Heart left ventricle (tissue), 16 donors: ENCODE measurements at regions of chr10 and their contacts with region 1.

Region 1: DNA sequence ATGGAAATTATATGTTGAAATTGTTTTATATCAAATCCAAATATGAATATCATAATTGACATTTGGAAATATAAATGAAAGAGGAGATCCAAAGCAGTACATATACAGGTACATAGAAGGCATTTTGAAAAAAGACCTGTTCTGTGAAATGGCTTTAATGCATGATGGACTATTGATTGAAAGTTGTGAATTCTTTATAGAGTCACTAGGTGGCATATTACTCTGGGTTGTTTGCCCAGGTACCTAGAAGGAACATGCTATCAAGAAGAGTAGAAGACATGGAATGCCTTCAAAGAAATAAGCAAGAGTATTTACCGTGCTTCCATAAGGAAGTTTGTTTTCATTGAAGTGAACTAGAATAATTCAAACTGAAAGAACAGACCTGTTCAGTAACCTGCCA is 160.0 kb upstream of the ANK3 start:
- DNase-seq: no peak
- ATAC-seq: no peak
- H3K4me3 ChIP-seq: no peak overlapping the region
- H3K27ac ChIP-seq: no peak overlapping the region
- H3K4me1 ChIP-seq: peaks cover 0 to 5% (median 0%) of the 10 kb centered on the region in 12 donors
- H3K27me3 ChIP-seq: no peaks in the 10 kb centered on the region
- CTCF ChIP-seq: peak in 7 of 12 donors; percentile 9 to 40 (median 31)
- POLR2A ChIP-seq: no peak

Region 2: GRCh38 chr10:60444494-60445064 is 105.1 kb before region 1 on chr10:
- intact Hi-C with region 1: loop called in 2 of 10 experiments (anchors 5 to 10 kb)
- DNase-seq: no peak
- ATAC-seq: no peak
- H3K4me3 ChIP-seq: no peak overlapping the region
- H3K27ac ChIP-seq: no peak overlapping the region
- H3K4me1 ChIP-seq: peaks cover 0 to 15% (median 12%) of the 10 kb centered on the region in 12 donors
- H3K27me3 ChIP-seq: no peaks in the 10 kb centered on the region
- CTCF ChIP-seq: peak in 11 of 12 donors; percentile 27 to 74 (median 53)
- POLR2A ChIP-seq: no peak

Region 3: DNA sequence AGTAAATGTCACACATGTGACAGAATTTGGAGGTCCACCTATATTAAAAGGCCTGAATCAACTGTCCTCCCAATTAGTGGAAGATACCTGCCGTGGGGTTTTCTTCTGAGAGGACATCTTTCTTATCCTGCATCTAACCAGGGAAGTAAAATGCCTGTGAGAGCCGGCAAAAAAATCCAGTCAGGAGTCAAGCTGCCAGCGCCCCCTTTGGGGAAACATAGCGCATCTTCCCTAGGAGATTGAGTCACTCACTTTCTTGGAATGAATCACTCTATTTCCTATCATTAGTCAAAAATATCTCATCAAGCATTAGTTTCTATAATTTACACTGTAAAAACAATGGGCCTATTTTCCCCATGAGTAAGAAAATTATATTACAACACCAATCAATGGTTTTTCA is 93.6 kb before region 1 on chr10:
- intact Hi-C with region 1: loop called in 2 of 10 experiments (anchors 10 kb)
- DNase-seq: no peak
- ATAC-seq: no peak
- H3K4me3 ChIP-seq: no peak overlapping the region
- H3K27ac ChIP-seq: no peak overlapping the region
- H3K4me1 ChIP-seq: peaks cover 0 to 11% (median 7%) of the 10 kb centered on the region in 12 donors
- H3K27me3 ChIP-seq: no peaks in the 10 kb centered on the region
- CTCF ChIP-seq: no peak
- POLR2A ChIP-seq: no peak

Region 4: DNA sequence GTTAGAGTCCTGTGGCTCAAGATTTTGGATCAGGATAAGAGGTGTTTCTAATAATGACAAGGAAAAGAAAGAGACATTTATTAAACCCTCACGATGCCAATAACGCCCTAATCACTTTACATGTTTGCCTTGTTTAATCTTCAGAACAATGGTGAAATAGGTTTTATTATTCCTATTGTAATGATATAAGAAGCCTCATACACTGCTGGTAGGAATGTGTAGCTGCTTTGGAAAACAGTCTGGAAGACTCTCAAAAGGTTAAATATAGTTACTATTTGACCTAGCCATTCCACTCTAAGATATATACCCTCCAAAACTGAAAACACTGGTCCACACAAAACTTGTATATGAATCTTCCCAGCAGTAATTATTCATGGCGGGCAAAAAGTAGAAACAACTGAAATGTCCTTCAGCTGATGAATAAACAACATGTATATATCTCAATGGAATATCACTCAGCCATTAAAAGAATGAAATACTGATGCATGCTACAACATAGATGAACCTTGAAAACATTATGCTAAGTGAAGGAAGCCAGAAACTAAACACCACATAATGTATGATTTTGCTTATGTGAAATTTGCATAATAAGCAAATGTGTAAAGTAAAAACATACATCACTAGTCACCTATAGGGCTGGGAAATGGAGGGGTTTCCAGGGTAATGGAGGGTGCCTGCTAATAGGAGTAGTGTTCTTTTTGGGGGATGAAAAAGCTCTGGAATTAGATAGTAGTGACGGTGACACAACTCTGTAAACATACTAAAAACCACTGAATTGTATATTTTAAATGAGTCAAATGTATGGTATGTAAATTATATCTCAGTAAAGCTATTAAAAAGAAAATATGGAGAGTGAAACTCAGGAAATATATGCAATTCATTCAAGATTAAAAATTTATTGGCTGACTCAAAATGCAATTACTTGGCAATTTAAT is 83.2 kb before region 1 on chr10:
- intact Hi-C with region 1: loop called in 1 of 10 experiments (anchors 10 kb)
- DNase-seq: no peak
- ATAC-seq: no peak
- H3K4me3 ChIP-seq: no peak overlapping the region
- H3K27ac ChIP-seq: no peak overlapping the region
- H3K4me1 ChIP-seq: peaks cover 0 to 5% (median 0%) of the 10 kb centered on the region in 12 donors
- H3K27me3 ChIP-seq: no peaks in the 10 kb centered on the region
- CTCF ChIP-seq: no peak
- POLR2A ChIP-seq: no peak

Region 5: GRCh38 chr10:60646966-60647796 is 97.5 kb after region 1 on chr10:
- intact Hi-C with region 1: loop called in 4 of 10 experiments (anchors 5 to 10 kb)
- DNase-seq: peak in 1 of 5 donors; percentile 10
- ATAC-seq: peak in 1 of 4 donors; percentile 53
- H3K4me3 ChIP-seq: no peak overlapping the region
- H3K27ac ChIP-seq: no peak overlapping the region
- H3K4me1 ChIP-seq: peaks cover 0 to 3% (median 0%) of the 10 kb centered on the region in 12 donors
- H3K27me3 ChIP-seq: no peaks in the 10 kb centered on the region
- CTCF ChIP-seq: peak; percentile 64 to 83 (median 76)
- POLR2A ChIP-seq: no peak